Activated CD8-positive, alpha-beta memory T cell treated with anti-CD3 and anti-CD28 coated beads, Interleukin-2, amount 10 ng/mL, durations not matched to agents 7 days and 5 days (primary cell): ENCODE measurements at regions of chr6 and their contacts with region 1.

Region 1: GRCh38 chr6:33711140-33712129 is at the start of gene UQCC2:
- DNase-seq: peak; percentile 99
- ATAC-seq: peak; percentile 99
- H3K4me3 Mint-ChIP-seq: peak within 1 kb of the TSS; percentile 90
- H3K27ac Mint-ChIP-seq: peak within 1 kb of the TSS; percentile 96
- H3K4me1 Mint-ChIP-seq: peaks cover 42% of the 10 kb centered on the region
- H3K27me3 Mint-ChIP-seq: peaks cover 6% of the 10 kb centered on the region
- total RNA-seq, gene UQCC2: 94.8 to 108 TPM

Region 2: DNA sequence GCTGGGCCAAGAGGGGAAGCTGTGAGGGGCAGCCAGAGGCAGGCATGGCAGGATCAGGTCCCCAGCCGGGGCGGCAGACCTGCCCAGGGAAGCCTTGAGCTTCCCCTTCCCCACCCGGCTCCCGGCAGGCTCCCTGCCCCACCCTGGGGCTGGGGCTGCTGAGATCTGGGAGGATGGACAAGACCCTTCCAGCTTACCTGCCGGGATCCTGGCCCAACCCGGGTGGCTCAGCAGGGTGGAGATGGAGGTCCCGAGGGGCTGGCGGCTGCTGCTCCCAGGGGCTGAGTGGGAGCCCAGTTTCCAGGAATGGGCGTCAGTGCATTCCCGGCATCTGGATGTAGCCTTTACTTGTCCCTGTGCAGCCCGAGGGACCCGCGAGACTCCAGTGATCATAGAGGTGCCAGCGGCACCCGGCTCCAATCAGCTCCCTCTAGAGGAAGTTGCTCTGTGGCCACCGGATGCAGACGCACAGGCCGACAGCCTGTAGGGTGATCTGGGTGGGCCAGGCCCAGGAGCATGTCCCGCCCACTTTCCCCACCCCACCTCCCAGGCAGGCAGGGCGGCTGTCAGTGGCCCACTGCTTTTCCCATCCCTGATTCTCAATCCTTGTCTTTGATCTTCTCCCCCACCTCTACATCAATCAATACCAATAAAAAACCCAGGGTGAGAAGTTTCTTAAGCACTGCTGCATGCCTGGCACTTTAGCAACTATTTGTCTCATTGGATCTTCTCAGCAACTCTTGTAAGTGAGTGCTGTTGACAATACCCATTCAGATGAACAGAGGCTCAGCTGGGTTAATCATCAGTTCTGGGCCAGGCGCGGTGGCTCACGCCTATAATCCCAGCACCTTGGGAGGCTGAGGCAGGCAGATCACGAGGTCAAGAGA is 131.4 kb before region 1 on chr6 and contains the start of gene BAK1:
- CTCF ChIA-PET with region 1: interaction called, 12 read pairs
- DNase-seq: peak; percentile 95
- ATAC-seq: peak; percentile 96
- H3K4me3 Mint-ChIP-seq: peak within 1 kb of the TSS; percentile 99
- H3K27ac Mint-ChIP-seq: peak within 1 kb of the TSS; percentile 97
- H3K4me1 Mint-ChIP-seq: peaks cover 39% of the 10 kb centered on the region
- H3K27me3 Mint-ChIP-seq: no peaks in the 10 kb centered on the region
- total RNA-seq, gene BAK1: 70.9 to 74.4 TPM

Region 3: DNA sequence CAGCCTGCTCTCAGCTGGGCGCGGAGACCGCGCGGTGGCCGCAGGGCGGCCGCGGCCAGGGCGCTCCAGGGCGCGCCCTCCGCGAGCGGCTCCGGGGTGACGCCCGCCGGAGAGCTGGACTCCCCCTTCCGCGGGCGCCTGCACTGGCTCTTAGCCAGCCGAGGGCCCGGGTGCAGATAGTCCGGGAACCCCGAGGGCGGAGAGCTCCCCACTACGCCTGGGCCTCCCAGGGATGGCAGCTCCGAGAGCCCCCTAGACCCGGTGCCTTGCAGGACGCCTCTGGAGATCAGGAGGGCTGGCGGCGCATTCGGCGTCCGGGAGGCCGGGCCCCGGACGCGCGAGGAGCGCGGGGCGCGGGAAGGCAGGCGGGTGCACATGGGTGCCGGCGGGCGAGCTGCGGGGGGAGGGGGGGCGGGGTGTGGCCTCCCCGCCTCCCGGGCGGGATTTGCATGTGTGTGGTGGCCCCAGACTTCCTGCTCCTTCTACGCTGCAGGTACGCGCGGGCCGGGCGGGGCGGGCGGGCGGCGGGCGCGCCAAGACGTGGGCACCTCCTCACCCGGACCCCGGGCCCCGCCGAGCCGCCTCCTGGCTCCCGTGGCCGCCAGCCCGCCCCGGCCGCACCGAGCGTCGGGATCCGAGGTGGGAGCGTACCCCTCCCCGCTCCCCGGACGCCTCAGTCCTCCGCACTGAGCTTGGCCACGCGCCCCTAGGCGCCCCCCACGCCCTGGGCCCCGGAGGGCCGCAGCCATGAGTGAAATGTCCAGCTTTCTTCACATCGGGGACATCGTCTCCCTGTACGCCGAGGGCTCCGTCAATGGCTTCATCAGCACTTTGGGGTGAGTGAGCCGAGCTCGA is 90.4 kb before region 1 on chr6 and contains the start of gene ITPR3:
- CTCF ChIA-PET with region 1: interaction called, 12 read pairs
- DNase-seq: peak; percentile 86
- ATAC-seq: peak; percentile 88
- H3K4me3 Mint-ChIP-seq: peak within 1 kb of the TSS; percentile 90
- H3K27ac Mint-ChIP-seq: peak within 1 kb of the TSS; percentile 92
- H3K4me1 Mint-ChIP-seq: peaks cover 54% of the 10 kb centered on the region
- H3K27me3 Mint-ChIP-seq: peaks cover 2% of the 10 kb centered on the region
- total RNA-seq, gene ITPR3: 44.9 to 71.3 TPM

Region 4: DNA sequence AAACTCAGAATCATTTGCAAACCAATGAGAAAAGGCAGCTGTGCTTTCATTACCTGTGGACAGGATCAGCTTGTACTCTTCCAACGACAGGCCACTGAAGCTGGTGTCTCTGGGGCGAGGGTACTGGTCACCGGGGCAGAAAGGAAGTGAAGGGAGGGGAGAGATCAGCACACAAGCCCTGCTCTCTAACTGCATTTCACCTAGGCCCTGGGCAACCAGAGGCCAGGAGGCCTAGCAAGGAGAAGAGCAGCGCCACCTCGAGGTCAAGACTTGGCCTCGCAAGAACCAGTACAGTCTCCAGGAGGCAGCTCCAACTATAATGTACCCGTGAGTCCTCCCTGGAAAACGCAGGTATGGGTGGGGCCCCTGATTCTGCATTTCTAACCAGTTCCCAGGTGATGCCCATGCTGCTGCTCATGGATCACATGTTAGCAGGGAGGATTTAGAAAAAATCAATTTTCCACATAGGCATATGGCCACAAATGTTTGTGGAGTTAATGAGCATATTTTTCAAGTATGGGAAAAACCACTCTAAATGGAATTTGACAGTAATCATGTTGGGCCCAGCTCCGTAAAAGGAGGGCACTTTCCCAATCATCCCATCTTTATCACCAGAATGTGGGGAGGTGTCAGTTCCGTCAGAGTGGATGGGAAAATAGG is 10.9 kb before region 1 on chr6:
- CTCF ChIA-PET with region 1: interaction called, 40 read pairs
- DNase-seq: peak; percentile 85
- ATAC-seq: peak; percentile 86
- H3K4me3 Mint-ChIP-seq: no peak overlapping the region
- H3K27ac Mint-ChIP-seq: peak overlapping the region; percentile 78
- H3K4me1 Mint-ChIP-seq: peaks cover 43% of the 10 kb centered on the region
- H3K27me3 Mint-ChIP-seq: no peaks in the 10 kb centered on the region

Region 5: DNA sequence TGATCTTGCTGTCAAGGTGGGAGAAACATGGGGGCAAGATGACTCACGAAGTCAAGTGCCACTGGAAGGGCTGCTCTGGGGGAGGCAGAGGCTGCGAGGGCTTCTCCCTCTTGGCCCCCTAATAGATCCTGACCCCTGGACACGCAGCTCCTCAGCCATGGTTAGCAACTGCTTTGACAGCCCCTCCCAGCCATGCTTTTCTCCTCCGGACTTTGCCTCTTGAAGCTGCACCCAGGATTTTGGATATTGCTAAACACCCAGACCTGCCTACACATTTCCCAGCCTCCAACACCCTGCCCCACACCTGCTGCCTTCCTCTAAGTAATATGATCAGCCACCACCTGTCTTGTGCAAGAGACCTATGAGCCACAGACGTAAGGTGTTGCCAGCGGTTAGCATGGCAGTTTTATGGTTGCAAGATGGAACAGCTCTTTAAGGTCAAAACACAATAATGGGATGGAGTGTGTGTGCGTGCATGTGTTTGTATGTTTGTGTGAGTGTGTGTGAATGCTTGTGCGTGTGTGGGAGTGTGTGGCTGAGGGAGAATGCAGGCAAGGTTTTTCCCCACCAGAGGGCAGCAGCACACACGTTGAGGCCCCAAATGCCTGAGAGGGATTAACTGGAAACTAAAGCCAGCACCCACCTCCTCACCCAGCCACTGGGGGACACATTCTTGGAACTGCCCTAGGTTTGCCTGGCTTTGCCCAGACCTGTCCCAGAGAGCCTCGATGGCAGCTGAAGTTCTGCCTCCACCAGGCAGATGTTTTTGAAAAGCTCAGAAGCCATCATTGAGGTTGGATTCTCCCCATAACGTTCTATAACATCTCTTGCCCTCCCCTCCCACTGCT is 32.8 kb after region 1 on chr6:
- CTCF ChIA-PET with region 1: interaction called, 12 read pairs
- DNase-seq: peak; percentile 80
- ATAC-seq: peak; percentile 78
- H3K4me3 Mint-ChIP-seq: no peak overlapping the region
- H3K27ac Mint-ChIP-seq: no peak overlapping the region
- H3K4me1 Mint-ChIP-seq: no peaks in the 10 kb centered on the region
- H3K27me3 Mint-ChIP-seq: peaks cover 18% of the 10 kb centered on the region